CD8-positive, alpha-beta T cell (primary cell): ENCODE measurements at regions of chr13 and their contacts with region 1.

Region 1: DNA sequence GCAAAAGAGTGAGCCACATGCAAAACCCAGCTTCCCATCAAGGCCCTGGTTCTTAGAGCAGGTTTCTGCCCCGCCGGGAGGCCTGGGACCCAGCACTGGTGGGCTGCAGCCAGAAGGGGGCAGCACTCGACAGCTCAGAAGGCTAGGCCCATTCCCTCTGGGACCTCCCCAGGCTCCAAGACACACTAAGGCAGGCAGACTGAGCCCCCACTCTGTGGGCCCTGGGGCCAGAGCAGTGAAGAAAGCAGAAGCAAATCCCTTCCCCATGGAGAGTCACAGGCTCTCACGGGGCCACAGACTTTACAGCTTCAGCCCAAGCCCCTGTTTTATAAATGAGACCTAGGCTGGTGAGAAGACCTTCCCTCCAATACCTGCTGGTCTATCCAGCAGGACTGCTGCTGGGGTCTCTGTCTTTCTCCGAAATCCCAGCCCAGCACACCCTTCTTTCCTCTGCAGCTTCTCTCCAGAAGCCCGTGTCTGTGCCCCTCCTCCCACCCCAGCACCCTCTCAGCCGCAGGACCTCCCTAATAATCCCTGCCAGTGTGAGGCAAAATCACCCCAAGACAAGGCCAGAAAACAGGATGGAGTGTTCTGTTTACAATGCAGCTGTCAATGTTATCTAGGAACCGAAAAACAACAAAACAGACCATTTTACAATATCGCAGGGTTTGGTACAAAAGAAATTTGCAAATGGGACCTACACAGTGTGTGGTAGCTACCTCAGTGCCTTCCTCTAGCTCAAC is 109.3 kb downstream of the ABCC4 start:
- DNase-seq: peak; percentile 29 to 74 (median 57)
- ATAC-seq: peak; percentile 65
- H3K4me3 ChIP-seq: no peak overlapping the region
- H3K4me3 Mint-ChIP-seq: no peak overlapping the region
- H3K27ac ChIP-seq: no peak overlapping the region
- H3K27ac Mint-ChIP-seq: no peak overlapping the region
- H3K4me1 ChIP-seq: no peaks in the 10 kb centered on the region
- H3K4me1 Mint-ChIP-seq: peaks cover 8% of the 10 kb centered on the region
- H3K27me3 ChIP-seq: no peaks in the 10 kb centered on the region
- H3K27me3 Mint-ChIP-seq: no peaks in the 10 kb centered on the region
- CTCF ChIP-seq: peak; percentile 54

Region 2: DNA sequence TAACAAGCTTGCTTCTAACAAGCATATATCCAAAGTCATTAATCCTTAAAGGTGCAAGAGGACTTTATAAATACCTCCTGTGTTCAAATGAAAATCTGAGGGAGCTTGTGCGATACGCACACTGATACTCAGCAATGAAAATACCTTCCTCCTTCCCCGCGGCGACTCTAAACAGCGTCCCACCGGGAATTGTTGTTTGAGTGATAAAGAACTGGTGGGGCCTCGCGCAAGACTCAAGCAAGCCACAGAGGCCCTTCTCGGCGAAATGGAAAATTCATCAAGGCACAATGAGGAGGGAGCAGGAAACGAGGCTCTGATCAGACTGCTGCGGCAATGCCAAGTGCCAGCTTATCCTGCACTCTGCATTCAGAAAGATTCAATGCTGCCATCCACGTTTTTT is 17.5 kb before region 1 on chr13:
- CTCF ChIA-PET with region 1: interaction called, 48 read pairs
- POLR2A ChIA-PET with region 1: interaction called, 5 read pairs
- intact Hi-C with region 1: no loop called
- DNase-seq: no peak
- ATAC-seq: no peak
- H3K4me3 ChIP-seq: no peak overlapping the region
- H3K4me3 Mint-ChIP-seq: no peak overlapping the region
- H3K27ac ChIP-seq: no peak overlapping the region
- H3K27ac Mint-ChIP-seq: no peak overlapping the region
- H3K4me1 ChIP-seq: peaks cover 22% of the 10 kb centered on the region
- H3K4me1 Mint-ChIP-seq: peaks cover 37% of the 10 kb centered on the region
- H3K27me3 ChIP-seq: no peaks in the 10 kb centered on the region
- H3K27me3 Mint-ChIP-seq: no peaks in the 10 kb centered on the region
- CTCF ChIP-seq: no peak

Region 3: DNA sequence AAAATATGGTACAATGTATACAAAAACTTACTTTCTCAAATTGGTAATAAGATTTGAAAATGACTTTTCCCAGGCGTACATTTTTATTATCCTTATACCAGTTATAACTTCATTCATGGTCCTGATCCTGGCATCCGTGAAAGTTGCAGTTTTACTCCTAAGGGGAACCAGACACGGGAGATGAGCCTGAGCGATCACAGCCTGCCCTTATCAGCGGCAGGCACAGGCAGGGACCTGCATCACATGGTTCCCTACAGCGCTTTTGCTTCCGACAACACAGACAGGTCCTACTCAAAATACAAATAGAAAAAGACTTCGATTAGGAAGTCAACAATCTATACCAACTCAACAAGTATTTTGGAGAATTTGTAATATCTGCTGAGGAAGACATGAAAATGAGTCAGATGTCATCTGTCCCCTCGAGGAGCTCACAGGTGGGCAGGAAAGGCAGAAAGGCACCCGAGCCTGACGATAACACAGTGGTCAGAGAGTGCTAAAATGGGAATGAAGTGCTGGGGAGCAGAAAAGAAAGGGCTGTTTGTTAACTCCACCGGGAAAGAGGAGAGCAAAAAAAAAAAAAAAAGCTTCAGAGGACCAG is 15.9 kb after region 1 on chr13:
- CTCF ChIA-PET with region 1: interaction called, 18 read pairs
- POLR2A ChIA-PET with region 1: interaction called, 3 read pairs
- intact Hi-C with region 1: no loop called
- DNase-seq: no peak
- ATAC-seq: no peak
- H3K4me3 ChIP-seq: no peak overlapping the region
- H3K4me3 Mint-ChIP-seq: no peak overlapping the region
- H3K27ac ChIP-seq: no peak overlapping the region
- H3K27ac Mint-ChIP-seq: no peak overlapping the region
- H3K4me1 ChIP-seq: no peaks in the 10 kb centered on the region
- H3K4me1 Mint-ChIP-seq: no peaks in the 10 kb centered on the region
- H3K27me3 ChIP-seq: no peaks in the 10 kb centered on the region
- H3K27me3 Mint-ChIP-seq: no peaks in the 10 kb centered on the region
- CTCF ChIP-seq: no peak

Region 4: GRCh38 chr13:95378603-95379002 is 186.6 kb after region 1 on chr13:
- CTCF ChIA-PET with region 1: interaction called, 150 read pairs
- POLR2A ChIA-PET with region 1: interaction called, 4 read pairs
- intact Hi-C with region 1: loop called (anchors 1 kb)
- DNase-seq: no peak
- ATAC-seq: no peak
- H3K4me3 ChIP-seq: no peak overlapping the region
- H3K4me3 Mint-ChIP-seq: no peak overlapping the region
- H3K27ac ChIP-seq: no peak overlapping the region
- H3K27ac Mint-ChIP-seq: no peak overlapping the region
- H3K4me1 ChIP-seq: no peaks in the 10 kb centered on the region
- H3K4me1 Mint-ChIP-seq: peaks cover 3% of the 10 kb centered on the region
- H3K27me3 ChIP-seq: no peaks in the 10 kb centered on the region
- H3K27me3 Mint-ChIP-seq: peaks cover 11% of the 10 kb centered on the region
- CTCF ChIP-seq: no peak

Region 5: DNA sequence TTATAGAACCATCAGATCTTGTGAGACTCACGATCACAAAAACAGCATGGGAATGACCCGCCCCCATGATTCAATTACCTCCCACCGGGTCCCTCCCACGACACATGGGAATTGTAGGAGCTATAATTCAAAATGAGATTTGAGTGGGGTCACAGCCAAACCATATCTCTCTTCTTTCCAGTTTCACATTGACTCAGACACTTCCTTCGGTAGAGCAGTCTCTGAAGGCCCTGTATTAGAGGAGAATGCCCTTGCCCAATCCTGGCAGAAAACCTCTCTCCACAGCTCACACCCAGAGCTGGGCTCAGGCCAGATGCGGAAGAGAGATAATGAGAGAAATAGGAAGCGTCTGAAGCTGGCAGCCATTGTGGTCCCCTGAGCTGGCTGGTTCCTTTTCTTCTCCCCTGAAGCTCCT is 288.1 kb after region 1 on chr13:
- CTCF ChIA-PET with region 1: interaction called, 10 read pairs
- POLR2A ChIA-PET with region 1: no interaction called
- intact Hi-C with region 1: loop called (anchors 1 to 5 kb)
- DNase-seq: peak in 1 of 9 experiments; percentile 23
- ATAC-seq: no peak
- H3K4me3 ChIP-seq: no peak overlapping the region
- H3K4me3 Mint-ChIP-seq: no peak overlapping the region
- H3K27ac ChIP-seq: no peak overlapping the region
- H3K27ac Mint-ChIP-seq: no peak overlapping the region
- H3K4me1 ChIP-seq: no peaks in the 10 kb centered on the region
- H3K4me1 Mint-ChIP-seq: peaks cover 4% of the 10 kb centered on the region
- H3K27me3 ChIP-seq: no peaks in the 10 kb centered on the region
- H3K27me3 Mint-ChIP-seq: peaks cover 5% of the 10 kb centered on the region
- CTCF ChIP-seq: no peak